ENCODE measurements at regions of chr10 and their contacts with region 1.

Region 1: GRCh38 chr10:73956476-73957359 is 41.2 kb upstream of the VCL start:
- DNase-seq: peak; percentile 10 to 68 (median 38)
- H3K4me3 ChIP-seq: peak overlapping the region; percentile 46
- H3K4me3 Mint-ChIP-seq: peak overlapping the region; percentile 69 to 95 (median 84)
- H3K27ac ChIP-seq: peak overlapping the region; percentile 67
- H3K27ac Mint-ChIP-seq: peak overlapping the region; percentile 67 to 98 (median 94)
- H3K4me1 ChIP-seq: peaks cover 51% of the 10 kb centered on the region
- H3K4me1 Mint-ChIP-seq: peaks cover 44 to 66% (median 65%) of the 10 kb centered on the region in 3 donors
- H3K27me3 ChIP-seq: no peaks in the 10 kb centered on the region
- H3K27me3 Mint-ChIP-seq: no peaks in the 10 kb centered on the region

Region 2: GRCh38 chr10:73545357-73545756 is 411.4 kb before region 1 on chr10:
- CTCF ChIA-PET with region 1: no interaction called
- POLR2A ChIA-PET with region 1: no interaction called
- DNase-seq: no peak
- H3K4me3 ChIP-seq: no peak overlapping the region
- H3K4me3 Mint-ChIP-seq: no peak overlapping the region
- H3K27ac ChIP-seq: no peak overlapping the region
- H3K27ac Mint-ChIP-seq: no peak overlapping the region
- H3K4me1 ChIP-seq: no peaks in the 10 kb centered on the region
- H3K4me1 Mint-ChIP-seq: no peaks in the 10 kb centered on the region
- H3K27me3 ChIP-seq: no peaks in the 10 kb centered on the region
- H3K27me3 Mint-ChIP-seq: peaks cover 0 to 1% of the 10 kb centered on the region in 2 donors

Region 3: DNA sequence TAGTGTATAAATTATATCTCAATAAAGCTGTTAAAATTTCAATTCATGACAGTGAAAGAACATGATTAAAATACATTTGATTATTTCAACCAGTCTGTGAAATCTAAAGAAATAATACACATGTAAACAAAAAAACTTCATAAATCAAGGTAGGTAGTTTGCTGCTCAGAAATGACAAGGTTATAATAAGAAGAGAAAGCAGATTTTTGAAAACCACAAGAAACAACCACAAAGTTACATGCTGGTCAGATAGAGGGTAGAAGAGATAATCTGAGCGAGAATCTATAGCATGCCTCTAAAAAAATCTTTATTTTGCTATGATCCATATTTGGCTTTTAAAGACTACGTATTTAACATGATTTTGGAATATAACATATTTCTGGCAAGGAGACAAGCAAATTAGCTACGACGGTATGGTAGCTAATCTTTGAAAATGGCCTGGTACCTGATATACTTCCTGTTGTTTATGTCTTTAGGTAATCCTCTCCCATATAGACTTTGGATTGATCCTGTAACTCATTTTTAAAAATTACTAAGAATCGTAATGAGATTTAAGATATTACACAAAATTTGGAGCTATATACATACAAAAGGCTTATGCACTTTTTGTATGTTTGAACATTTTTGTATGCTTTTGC is 17.7 kb after region 1 on chr10:
- CTCF ChIA-PET with region 1: interaction called, 14 read pairs
- POLR2A ChIA-PET with region 1: no interaction called
- DNase-seq: peak in 1 of 5 donors; percentile 23
- H3K4me3 ChIP-seq: peak overlapping the region; percentile 27
- H3K4me3 Mint-ChIP-seq: peak overlapping the region; percentile 6 to 79 (median 63)
- H3K27ac ChIP-seq: no peak overlapping the region
- H3K27ac Mint-ChIP-seq: peak overlapping the region in 6 of 8 donors; percentile 4 to 83 (median 58)
- H3K4me1 ChIP-seq: peaks cover 23% of the 10 kb centered on the region
- H3K4me1 Mint-ChIP-seq: peaks cover 24 to 35% (median 33%) of the 10 kb centered on the region in 3 donors
- H3K27me3 ChIP-seq: no peaks in the 10 kb centered on the region
- H3K27me3 Mint-ChIP-seq: peaks cover 0 to 2% of the 10 kb centered on the region in 2 donors

Region 4: GRCh38 chr10:73991884-73992245 is 35.1 kb after region 1 on chr10:
- CTCF ChIA-PET with region 1: interaction called, 16 read pairs
- POLR2A ChIA-PET with region 1: interaction called, 6 read pairs
- DNase-seq: peak; percentile 64 to 88 (median 78)
- H3K4me3 ChIP-seq: peak overlapping the region; percentile 16
- H3K4me3 Mint-ChIP-seq: peak overlapping the region; percentile 1 to 71 (median 51)
- H3K27ac ChIP-seq: no peak overlapping the region
- H3K27ac Mint-ChIP-seq: peak overlapping the region; percentile 30 to 95 (median 70)
- H3K4me1 ChIP-seq: peaks cover 33% of the 10 kb centered on the region
- H3K4me1 Mint-ChIP-seq: peaks cover 27 to 51% (median 41%) of the 10 kb centered on the region in 3 donors
- H3K27me3 ChIP-seq: no peaks in the 10 kb centered on the region
- H3K27me3 Mint-ChIP-seq: no peaks in the 10 kb centered on the region

Measured in CD8-positive, alpha-beta memory T cell (primary cell).